ENCODE measurements at regions of chr1 and their contacts with region 1.

Region 1: DNA sequence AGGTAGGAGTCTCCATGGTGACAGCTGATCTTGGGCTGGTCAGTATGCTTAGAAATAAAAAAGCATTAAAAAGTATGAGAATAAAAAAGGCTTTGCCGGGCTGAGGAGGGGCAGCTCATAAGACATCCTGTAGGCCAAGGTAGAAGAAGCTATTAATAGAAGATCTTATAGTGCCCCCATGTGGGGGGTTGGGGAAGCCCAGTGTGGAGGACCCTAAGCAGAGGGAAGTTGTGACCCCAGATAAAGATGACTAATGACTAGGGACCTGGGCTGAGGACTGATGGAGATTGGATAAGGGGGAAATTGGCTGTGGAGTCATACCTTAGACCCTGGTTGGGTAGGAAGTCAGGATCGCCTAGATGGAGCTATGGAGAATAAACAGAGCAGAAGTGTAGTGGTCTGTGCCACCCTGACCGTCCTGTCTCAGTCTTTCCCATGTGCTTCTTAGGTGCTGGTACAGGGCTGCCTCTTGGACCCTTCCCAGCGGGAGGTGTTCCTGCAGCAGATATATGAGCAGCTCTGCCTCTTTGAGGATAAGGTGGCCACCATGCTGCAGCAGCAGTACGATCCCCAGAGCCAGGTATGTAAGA is 25.0 kb downstream of the SZT2 start:
- DNase-seq: peak in 41 of 42 donors; percentile 21 to 87 (median 53)

Region 2: GRCh38 chr1:43227143-43227764 is 187.5 kb before region 1 on chr1:
- intact Hi-C with region 1: loop called (anchors 2 kb)
- DNase-seq: peak; percentile 74 to 97 (median 91)

Measured in head of caudate nucleus (tissue), 42 donors.